ENCODE measurements at regions of chr3 and their contacts with region 1.

Region 1: GRCh38 chr3:62220616-62221015 is 152.7 kb downstream of the FEZF2 start:
- DNase-seq: no peak
- H3K4me3 ChIP-seq: no peak overlapping the region
- CTCF ChIP-seq: no peak
- POLR2A ChIP-seq: no peak

Region 2: GRCh38 chr3:62261121-62261520 is 40.5 kb after region 1 on chr3:
- intact Hi-C with region 1: loop called (anchors 1 kb)
- DNase-seq: peak in 1 of 2 donors; percentile 21
- H3K4me3 ChIP-seq: no peak overlapping the region
- CTCF ChIP-seq: no peak
- POLR2A ChIP-seq: no peak

Region 3: DNA sequence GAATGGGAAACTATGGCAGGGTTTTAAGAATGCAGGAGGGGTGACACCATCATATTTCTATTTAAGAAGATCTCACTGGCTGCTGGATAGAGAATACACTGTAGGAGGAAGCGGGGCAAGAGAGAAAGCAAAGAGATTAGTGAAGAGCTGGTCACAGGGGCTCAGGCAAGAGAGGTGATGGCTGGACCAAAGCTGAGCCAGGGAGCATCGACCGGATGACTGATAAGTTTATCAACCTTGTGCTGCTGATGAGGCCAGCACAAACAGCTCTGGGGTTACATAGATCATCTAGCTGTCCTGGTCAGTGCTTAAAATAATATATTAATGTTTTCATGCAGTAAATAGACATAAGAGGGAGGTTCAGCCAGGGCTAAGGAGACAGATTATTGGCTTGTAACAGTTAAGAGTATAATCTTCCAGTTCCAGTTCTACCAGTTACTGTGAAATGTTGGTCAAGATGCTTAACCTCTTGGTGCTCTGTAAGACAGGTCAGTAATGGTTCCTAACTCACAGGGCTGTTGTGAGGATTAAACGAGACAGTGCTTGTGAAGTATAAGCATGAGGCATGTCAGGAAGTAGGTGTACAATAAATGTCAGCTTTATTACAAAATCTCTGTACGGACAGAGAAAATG is 353.8 kb after region 1 on chr3:
- intact Hi-C with region 1: no loop called
- DNase-seq: no peak
- H3K4me3 ChIP-seq: no peak overlapping the region
- CTCF ChIP-seq: no peak
- POLR2A ChIP-seq: no peak

Measured in lower leg skin (tissue), 4 donors.